ENCODE measurements at regions of chr7 and their contacts with region 1.

Region 1: GRCh38 chr7:3065724-3066143 is 22.1 kb upstream of the CARD11 start:
- DNase-seq: peak; percentile 28 to 84 (median 65)
- ATAC-seq: peak; percentile 45
- H3K4me3 ChIP-seq: no peak overlapping the region
- H3K4me3 Mint-ChIP-seq: peak overlapping the region; percentile 55
- H3K27ac ChIP-seq: peak overlapping the region in 1 of 2 experiments; percentile 83
- H3K27ac Mint-ChIP-seq: peak overlapping the region; percentile 85
- H3K4me1 ChIP-seq: peaks cover 86% of the 10 kb centered on the region
- H3K4me1 Mint-ChIP-seq: peaks cover 80% of the 10 kb centered on the region
- H3K27me3 ChIP-seq: no peaks in the 10 kb centered on the region
- H3K27me3 Mint-ChIP-seq: no peaks in the 10 kb centered on the region
- CTCF ChIP-seq: peak; percentile 61

Region 2: DNA sequence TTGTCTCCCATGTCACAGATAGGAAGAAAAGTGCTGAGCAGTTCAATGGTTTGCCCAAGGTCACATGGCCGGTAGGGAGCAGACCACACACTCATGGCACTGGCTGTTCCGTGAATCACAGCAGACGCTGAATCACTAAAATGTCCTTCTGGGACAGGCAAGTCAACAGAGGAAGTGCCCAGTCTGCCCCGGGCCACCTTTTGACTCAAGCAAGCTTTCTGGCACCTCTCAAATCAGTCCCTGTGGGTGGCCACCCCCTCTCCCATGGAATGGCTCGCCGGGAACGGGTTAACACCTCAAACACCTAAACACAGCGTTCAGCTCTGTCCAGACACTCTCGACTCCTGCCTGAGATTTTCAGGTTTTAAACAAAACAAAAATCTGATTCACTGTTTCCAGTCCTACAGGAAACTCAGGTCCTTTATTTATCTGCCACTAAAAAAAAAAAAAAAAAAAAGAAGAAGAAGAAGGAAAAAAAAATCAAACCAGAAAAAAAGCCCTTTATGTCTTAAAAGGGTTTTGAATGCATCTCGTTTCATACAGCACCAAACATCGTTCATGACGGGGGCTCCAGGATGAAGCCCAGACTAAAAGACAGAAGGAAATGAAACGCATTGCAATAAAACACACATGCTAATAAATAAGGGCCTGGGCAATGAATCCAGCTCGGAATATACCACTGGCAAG is 37.5 kb before region 1 on chr7:
- CTCF ChIA-PET with region 1: no interaction called
- POLR2A ChIA-PET with region 1: interaction called, 3 read pairs
- intact Hi-C with region 1: loop called in 1 of 2 experiments (anchors 5 kb)
- DNase-seq: peak in 4 of 9 experiments; percentile 24 to 30 (median 27)
- ATAC-seq: peak; percentile 62
- H3K4me3 ChIP-seq: no peak overlapping the region
- H3K4me3 Mint-ChIP-seq: peak overlapping the region; percentile 45
- H3K27ac ChIP-seq: peak overlapping the region in 1 of 2 experiments; percentile 33
- H3K27ac Mint-ChIP-seq: peak overlapping the region; percentile 68
- H3K4me1 ChIP-seq: peaks cover 24% of the 10 kb centered on the region
- H3K4me1 Mint-ChIP-seq: peaks cover 68% of the 10 kb centered on the region
- H3K27me3 ChIP-seq: no peaks in the 10 kb centered on the region
- H3K27me3 Mint-ChIP-seq: no peaks in the 10 kb centered on the region
- CTCF ChIP-seq: no peak

Region 3: DNA sequence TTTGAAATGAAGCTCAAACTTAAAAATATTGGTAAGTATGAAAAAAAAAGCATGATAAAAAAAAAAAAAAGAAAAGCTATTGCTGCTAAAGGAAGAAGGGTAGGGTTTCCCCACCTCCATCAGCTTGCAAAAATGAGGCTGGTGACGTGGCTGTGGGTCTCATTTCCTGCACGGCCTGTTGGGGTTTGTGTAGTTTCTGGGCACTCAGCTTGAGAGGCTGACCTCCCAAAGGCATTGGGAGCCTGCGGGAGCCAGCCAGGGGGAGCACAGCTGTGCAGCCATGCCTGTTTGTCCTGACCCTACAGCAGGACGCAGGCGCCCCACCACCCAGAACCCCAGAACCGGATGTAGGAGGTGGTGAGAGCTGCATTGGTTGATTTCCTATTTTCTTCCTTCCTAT is 26.7 kb after region 1 on chr7:
- CTCF ChIA-PET with region 1: interaction called, 51 read pairs
- POLR2A ChIA-PET with region 1: interaction called, 67 read pairs
- intact Hi-C with region 1: loop called (anchors 1 to 2 kb)
- DNase-seq: peak; percentile 33 to 94 (median 73)
- ATAC-seq: peak; percentile 82
- H3K4me3 ChIP-seq: peak overlapping the region; percentile 15 to 31
- H3K4me3 Mint-ChIP-seq: peak overlapping the region; percentile 55
- H3K27ac ChIP-seq: peak overlapping the region; percentile 56 to 96
- H3K27ac Mint-ChIP-seq: peak overlapping the region; percentile 96
- H3K4me1 ChIP-seq: peaks cover 74% of the 10 kb centered on the region
- H3K4me1 Mint-ChIP-seq: peaks cover 74% of the 10 kb centered on the region
- H3K27me3 ChIP-seq: no peaks in the 10 kb centered on the region
- H3K27me3 Mint-ChIP-seq: no peaks in the 10 kb centered on the region
- CTCF ChIP-seq: no peak

Region 4: DNA sequence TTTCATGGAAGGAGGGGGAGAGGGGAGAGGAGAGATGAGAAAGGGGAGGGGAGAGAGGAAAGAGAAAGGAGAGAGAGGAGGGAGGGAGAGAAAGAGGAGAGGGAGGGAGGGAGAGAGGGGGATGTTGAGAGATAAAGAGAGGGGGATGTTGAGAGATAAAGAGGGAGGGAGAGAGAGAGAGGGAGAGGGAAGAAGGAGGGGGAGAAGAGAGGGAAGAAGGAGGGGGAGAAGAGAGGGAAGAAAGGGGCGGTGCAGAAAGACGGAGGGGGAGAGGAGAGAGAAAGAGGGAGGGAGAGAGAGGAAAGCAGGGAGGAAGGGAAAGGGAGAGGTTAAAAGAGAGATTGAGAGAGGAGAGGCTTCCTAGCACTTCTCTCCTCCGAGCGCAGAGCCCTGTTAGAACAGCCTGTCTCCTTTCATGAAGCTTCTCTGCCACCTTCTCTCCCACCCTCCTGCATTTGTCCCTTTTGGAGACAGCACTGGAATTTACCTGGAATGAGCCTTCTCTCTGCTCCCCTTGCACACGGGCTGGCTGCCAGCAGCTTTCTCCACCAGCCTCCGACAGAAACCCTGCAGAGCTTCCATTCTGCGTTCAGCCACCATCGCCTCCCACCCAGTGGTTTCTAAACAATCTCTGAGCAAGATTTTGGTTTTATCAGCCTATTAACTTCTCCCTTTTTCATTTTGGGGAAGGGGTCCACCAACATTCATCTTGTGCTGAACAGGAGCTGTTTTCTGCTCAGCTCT is 51.9 kb after region 1 on chr7:
- CTCF ChIA-PET with region 1: interaction called, 6 read pairs
- POLR2A ChIA-PET with region 1: interaction called, 7 read pairs
- intact Hi-C with region 1: loop called (anchors 2 to 10 kb)
- DNase-seq: peak in 4 of 9 experiments; percentile 35 to 69 (median 51)
- ATAC-seq: peak; percentile 54
- H3K4me3 ChIP-seq: peak overlapping the region in 1 of 2 experiments; percentile 40
- H3K4me3 Mint-ChIP-seq: peak overlapping the region; percentile 90
- H3K27ac ChIP-seq: peak overlapping the region in 1 of 2 experiments; percentile 4
- H3K27ac Mint-ChIP-seq: peak overlapping the region; percentile 97
- H3K4me1 ChIP-seq: peaks cover 61% of the 10 kb centered on the region
- H3K4me1 Mint-ChIP-seq: peaks cover 79% of the 10 kb centered on the region
- H3K27me3 ChIP-seq: no peaks in the 10 kb centered on the region
- H3K27me3 Mint-ChIP-seq: no peaks in the 10 kb centered on the region
- CTCF ChIP-seq: no peak

Region 5: GRCh38 chr7:3370068-3370830 is 304.5 kb after region 1 on chr7:
- CTCF ChIA-PET with region 1: no interaction called
- POLR2A ChIA-PET with region 1: no interaction called
- intact Hi-C with region 1: no loop called
- DNase-seq: no peak
- ATAC-seq: no peak
- H3K4me3 ChIP-seq: no peak overlapping the region
- H3K4me3 Mint-ChIP-seq: no peak overlapping the region
- H3K27ac ChIP-seq: no peak overlapping the region
- H3K27ac Mint-ChIP-seq: no peak overlapping the region
- H3K4me1 ChIP-seq: no peaks in the 10 kb centered on the region
- H3K4me1 Mint-ChIP-seq: peaks cover 6% of the 10 kb centered on the region
- H3K27me3 ChIP-seq: peaks cover 0 to 3% of the 10 kb centered on the region in 2 experiments
- H3K27me3 Mint-ChIP-seq: peaks cover 7% of the 10 kb centered on the region
- CTCF ChIP-seq: no peak